Common myeloid progenitor, CD34-positive (primary cell): ENCODE measurements at regions of chr20 and their contacts with region 1.

Region 1: DNA sequence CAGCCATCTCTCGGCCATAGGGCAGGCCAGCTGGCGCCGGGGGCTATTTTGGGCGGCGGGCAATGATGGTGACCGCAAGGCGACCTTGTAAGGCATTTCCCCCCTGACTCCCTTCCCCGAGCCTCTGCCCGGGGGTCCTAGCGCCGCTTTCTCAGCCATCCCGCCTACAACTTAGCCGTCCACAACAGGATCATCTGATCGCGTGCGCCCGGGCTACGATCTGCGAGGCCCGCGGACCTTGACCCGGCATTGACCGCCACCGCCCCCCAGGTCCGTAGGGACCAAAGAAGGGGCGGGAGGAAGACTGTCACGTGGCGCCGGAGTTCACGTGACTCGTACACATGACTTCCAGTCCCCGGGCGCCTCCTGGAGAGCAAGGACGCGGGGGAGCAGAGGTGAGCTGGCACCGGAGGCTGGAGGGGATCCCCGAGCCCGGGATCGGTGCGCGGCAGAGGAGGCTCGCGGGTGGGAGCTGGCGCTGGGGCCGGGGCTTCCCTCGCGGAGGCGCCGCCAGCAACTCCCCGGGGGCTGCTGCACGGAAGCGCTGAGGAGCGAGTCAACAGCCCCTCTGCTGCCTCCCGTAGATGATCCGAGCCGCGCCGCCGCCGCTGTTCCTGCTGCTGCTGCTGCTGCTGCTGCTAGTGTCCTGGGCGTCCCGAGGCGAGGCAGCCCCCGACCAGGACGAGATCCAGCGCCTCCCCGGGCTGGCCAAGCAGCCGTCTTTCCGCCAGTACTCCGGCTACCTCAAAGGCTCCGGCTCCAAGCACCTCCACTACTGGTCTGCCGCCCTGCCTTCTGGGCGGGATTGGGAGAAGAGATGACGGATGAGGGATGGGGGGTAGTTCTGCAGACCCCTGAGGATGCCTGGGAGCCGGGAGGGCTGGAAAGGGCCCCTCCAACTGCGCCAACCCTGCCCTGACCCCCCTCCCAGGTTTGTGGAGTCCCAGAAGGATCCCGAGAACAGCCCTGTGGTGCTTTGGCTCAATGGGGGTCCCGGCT is at the starts of genes CTSA and NEURL2:
- DNase-seq: peak; percentile 74 to 81 (median 79)
- H3K4me3 ChIP-seq: peak within 1 kb of the TSS; percentile 52 to 86 (median 80)
- H3K27ac ChIP-seq: peak within 1 kb of the TSS; percentile 25 to 70
- H3K4me1 ChIP-seq: peaks cover 8 to 49% (median 41%) of the 10 kb centered on the region in 4 experiments
- H3K27me3 ChIP-seq: no peaks in the 10 kb centered on the region

Region 2: DNA sequence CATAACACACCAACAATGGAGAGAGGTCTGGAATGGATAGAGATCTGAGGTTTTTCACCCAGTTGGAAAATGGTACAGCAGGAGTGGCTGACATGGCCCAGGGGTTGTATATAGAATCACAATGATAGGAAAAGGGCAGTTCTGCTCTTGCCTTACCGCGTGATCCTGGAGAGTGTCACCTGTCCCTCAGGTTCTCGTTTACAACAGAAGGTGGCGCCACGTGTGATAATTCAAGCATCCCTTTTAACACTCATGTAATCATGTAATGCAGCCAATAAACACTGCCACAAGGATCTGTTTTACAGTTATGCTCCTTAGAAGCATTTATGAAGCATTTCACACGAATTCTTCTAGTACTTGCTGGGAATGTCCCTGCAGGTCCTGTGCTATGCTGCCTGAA is 434.7 kb before region 1 on chr20:
- CTCF ChIA-PET with region 1: no interaction called
- POLR2A ChIA-PET with region 1: no interaction called
- DNase-seq: peak; percentile 52 to 77 (median 73)
- H3K4me3 ChIP-seq: no peak overlapping the region
- H3K27ac ChIP-seq: no peak overlapping the region
- H3K4me1 ChIP-seq: no peaks in the 10 kb centered on the region
- H3K27me3 ChIP-seq: no peaks in the 10 kb centered on the region

Region 3: GRCh38 chr20:45880988-45881788 is 10.1 kb before region 1 on chr20 and contains the start of gene ZSWIM1:
- CTCF ChIA-PET with region 1: interaction called, 30 read pairs
- POLR2A ChIA-PET with region 1: interaction called, 12 read pairs
- DNase-seq: peak; percentile 98 to 99 (median 98)
- H3K4me3 ChIP-seq: peak within 1 kb of the TSS; percentile 37 to 91 (median 79)
- H3K27ac ChIP-seq: peak within 1 kb of the TSS; percentile 90 to 92
- H3K4me1 ChIP-seq: peaks cover 9 to 42% (median 35%) of the 10 kb centered on the region in 4 experiments
- H3K27me3 ChIP-seq: no peaks in the 10 kb centered on the region

Region 4: GRCh38 chr20:45910670-45911485 is 19.6 kb after region 1 on chr20:
- CTCF ChIA-PET with region 1: interaction called, 16 read pairs
- POLR2A ChIA-PET with region 1: interaction called, 8 read pairs
- DNase-seq: peak; percentile 100
- H3K4me3 ChIP-seq: peak overlapping the region; percentile 37 to 79 (median 69)
- H3K27ac ChIP-seq: peak overlapping the region; percentile 46 to 74
- H3K4me1 ChIP-seq: peaks cover 13 to 40% (median 34%) of the 10 kb centered on the region in 4 experiments
- H3K27me3 ChIP-seq: no peaks in the 10 kb centered on the region

Region 5: GRCh38 chr20:45963059-45964005 is 72.0 kb after region 1 on chr20:
- CTCF ChIA-PET with region 1: interaction called, 21 read pairs
- POLR2A ChIA-PET with region 1: interaction called, 4 read pairs
- DNase-seq: peak; percentile 44 to 75 (median 69)
- H3K4me3 ChIP-seq: no peak overlapping the region
- H3K27ac ChIP-seq: no peak overlapping the region
- H3K4me1 ChIP-seq: peaks cover 0 to 1% (median under 1%) of the 10 kb centered on the region in 4 experiments
- H3K27me3 ChIP-seq: no peaks in the 10 kb centered on the region